ENCODE measurements at regions of chr22 and their contacts with region 1.

Region 1: GRCh38 chr22:24845041-24845898 is 39.3 kb downstream of the SGSM1 start:
- DNase-seq: no peak
- H3K4me3 ChIP-seq: no peak overlapping the region
- H3K27ac ChIP-seq: no peak overlapping the region
- H3K4me1 ChIP-seq: peaks cover 0 to 10% (median 7%) of the 10 kb centered on the region in 4 donors
- H3K27me3 ChIP-seq: no peaks in the 10 kb centered on the region
- CTCF ChIP-seq: no peak
- EP300 ChIP-seq: no peak
- POLR2A ChIP-seq: no peak

Region 2: DNA sequence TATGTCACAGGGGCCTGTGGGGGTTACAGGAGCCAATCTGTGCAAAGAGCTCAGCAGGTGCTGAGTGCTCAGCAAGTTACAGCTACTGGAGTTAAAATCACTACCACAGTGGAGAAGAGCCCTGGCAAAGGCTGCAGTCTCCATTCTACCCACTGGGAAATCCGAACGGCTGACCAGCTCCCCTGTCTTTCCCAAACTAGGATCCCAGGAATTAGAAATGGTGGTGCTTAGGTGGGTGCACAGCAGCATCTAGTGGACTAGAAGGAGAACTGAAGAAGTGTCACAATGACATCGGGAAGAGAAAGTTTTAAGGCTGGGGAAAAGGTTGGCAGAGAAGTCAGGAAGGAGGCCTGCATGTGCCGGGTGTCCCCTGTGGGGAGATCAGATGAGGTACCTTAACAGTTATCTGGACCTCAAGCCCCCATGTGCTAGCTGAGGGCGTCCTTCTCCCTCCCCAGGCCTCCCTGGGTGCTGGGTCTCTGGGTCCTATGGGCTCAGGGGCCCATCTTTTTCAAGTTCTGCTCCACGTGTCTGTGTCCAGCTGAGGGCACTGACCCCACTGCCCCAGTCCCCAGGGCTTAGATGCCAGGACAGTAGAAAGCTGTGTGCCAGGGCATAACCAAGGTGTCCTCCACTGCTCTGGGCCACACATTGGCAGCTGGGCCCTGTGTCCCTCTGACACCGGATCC is 72.6 kb before region 1 on chr22:
- intact Hi-C with region 1: loop called (anchors 5 kb)
- DNase-seq: peak in 1 of 2 donors; percentile 56
- H3K4me3 ChIP-seq: no peak overlapping the region
- H3K27ac ChIP-seq: no peak overlapping the region
- H3K4me1 ChIP-seq: no peaks in the 10 kb centered on the region
- H3K27me3 ChIP-seq: no peaks in the 10 kb centered on the region
- CTCF ChIP-seq: peak in 2 of 7 experiments; percentile 18
- EP300 ChIP-seq: no peak
- POLR2A ChIP-seq: no peak

Measured in stomach (tissue), 19 donors.